Activated CD4-positive, alpha-beta T cell treated with anti-CD3 and anti-CD28 coated beads, Interleukin-2, amount 10 ng/mL, durations not matched to agents 7 days and 5 days (primary cell): ENCODE measurements at regions of chr6 and their contacts with region 1.

Region 1: DNA sequence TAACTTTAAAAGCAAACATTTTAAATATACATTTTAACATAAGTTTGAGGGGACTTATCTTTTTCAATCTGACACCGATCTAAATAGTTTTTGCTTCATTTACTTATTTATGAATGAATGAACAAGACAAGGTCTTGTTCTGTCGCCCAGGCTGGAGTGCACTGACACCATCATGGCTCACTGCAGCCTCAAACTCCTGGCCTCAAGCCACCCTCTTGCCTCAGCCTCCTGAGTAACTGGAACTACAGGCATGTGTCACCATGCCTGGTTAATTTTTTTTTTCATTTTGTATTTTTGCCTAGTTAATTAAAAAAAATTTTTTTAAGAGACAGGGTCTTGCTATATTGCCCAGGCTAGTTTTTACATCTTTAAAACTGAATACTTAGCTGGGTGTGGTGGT is 25.4 kb downstream of the FBXO9 start:
- DNase-seq: no peak
- H3K4me3 Mint-ChIP-seq: no peak overlapping the region
- H3K27ac Mint-ChIP-seq: no peak overlapping the region
- H3K4me1 Mint-ChIP-seq: peaks cover 5% of the 10 kb centered on the region
- H3K27me3 Mint-ChIP-seq: no peaks in the 10 kb centered on the region

Region 2: GRCh38 chr6:53134601-53135235 is 44.1 kb after region 1 on chr6:
- CTCF ChIA-PET with region 1: no interaction called
- POLR2A ChIA-PET with region 1: interaction called, 21 read pairs
- DNase-seq: no peak
- H3K4me3 Mint-ChIP-seq: no peak overlapping the region
- H3K27ac Mint-ChIP-seq: no peak overlapping the region
- H3K4me1 Mint-ChIP-seq: peaks cover 4% of the 10 kb centered on the region
- H3K27me3 Mint-ChIP-seq: peaks cover 1% of the 10 kb centered on the region